Spleen (tissue), 13 donors: ENCODE measurements at regions of chr14 and their contacts with region 1.

Region 1: DNA sequence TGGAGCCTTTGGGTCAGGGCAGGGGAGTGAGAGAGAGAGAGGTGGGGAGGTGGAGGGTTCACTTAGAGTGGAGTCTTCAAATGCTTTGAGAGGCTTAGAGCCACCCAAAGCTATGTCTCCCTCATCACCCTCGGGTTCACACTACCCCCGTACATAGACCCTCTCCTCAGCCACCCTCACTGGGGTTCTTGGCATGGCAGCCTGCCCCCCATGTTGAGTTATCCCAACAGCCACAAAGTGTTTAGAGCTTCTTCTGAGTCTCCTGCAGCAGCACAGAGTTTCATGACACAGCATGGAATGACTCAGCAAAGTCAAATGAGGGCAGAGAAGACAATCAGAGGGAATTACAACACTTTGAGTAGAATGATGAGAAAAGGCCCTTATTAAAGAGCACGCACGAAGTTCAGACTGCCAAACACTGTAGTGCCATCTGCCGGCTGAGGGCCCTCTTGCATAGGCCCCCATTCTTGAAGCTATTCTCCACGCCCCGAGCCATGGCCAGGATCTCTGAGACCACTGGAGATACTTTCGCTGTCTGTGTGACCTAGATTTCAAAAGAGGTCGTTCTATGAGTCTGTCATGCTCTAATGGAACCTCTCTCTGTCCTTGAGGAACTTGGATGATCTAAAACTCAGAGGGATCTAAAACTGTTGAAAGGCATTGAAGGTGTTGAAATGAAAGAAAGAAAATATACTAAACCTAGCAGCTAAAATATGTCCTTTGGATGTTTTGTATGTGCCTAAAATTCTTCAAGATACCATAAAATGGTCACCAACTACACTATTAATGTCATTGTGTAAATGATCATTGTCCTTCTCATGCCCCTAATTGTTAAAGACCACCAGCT is 221.9 kb downstream of the PELI2 start:
- DNase-seq: peak; percentile 84
- H3K4me3 ChIP-seq: no peak overlapping the region
- H3K27ac ChIP-seq: peak overlapping the region in 1 of 8 donors; percentile 3
- H3K4me1 ChIP-seq: peaks cover 0 to 49% (median 22%) of the 10 kb centered on the region in 6 donors
- H3K27me3 ChIP-seq: no peaks in the 10 kb centered on the region
- CTCF ChIP-seq: peak; percentile 56 to 88 (median 78)
- POLR2A ChIP-seq: no peak

Region 2: GRCh38 chr14:55731881-55732498 is 608.1 kb before region 1 on chr14:
- intact Hi-C with region 1: loop called (anchors 10 kb)
- DNase-seq: no peak
- H3K4me3 ChIP-seq: no peak overlapping the region
- H3K27ac ChIP-seq: no peak overlapping the region
- H3K4me1 ChIP-seq: no peaks in the 10 kb centered on the region
- H3K27me3 ChIP-seq: no peaks in the 10 kb centered on the region
- CTCF ChIP-seq: peak in 10 of 11 experiments; percentile 24 to 66 (median 53)
- POLR2A ChIP-seq: no peak

Region 3: GRCh38 chr14:55846826-55847446 is 493.1 kb before region 1 on chr14:
- intact Hi-C with region 1: loop called (anchors 10 kb)
- DNase-seq: no peak
- H3K4me3 ChIP-seq: no peak overlapping the region
- H3K27ac ChIP-seq: no peak overlapping the region
- H3K4me1 ChIP-seq: peaks cover 0 to 8% (median 3%) of the 10 kb centered on the region in 6 donors
- H3K27me3 ChIP-seq: no peaks in the 10 kb centered on the region
- CTCF ChIP-seq: no peak
- POLR2A ChIP-seq: no peak

Region 4: DNA sequence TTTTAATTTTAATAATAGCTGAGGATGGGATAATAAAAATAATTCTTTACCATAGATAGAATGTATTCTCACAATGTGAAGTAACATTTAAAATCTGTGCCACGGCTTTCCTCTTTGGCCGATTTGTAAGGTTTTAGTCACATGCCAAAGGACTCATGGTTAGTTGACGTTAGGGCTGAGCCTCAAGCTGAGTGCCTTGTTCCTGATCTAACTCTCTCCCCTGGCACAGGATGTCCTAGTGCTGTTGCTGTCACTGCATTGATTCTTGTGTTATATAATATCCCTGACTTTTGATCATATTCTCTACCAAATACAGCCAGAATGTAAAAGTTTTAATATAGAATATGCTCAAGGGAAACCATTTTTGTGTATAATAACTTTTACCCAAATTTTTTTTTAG is 77.5 kb before region 1 on chr14:
- intact Hi-C with region 1: no loop called
- DNase-seq: no peak
- H3K4me3 ChIP-seq: no peak overlapping the region
- H3K27ac ChIP-seq: no peak overlapping the region
- H3K4me1 ChIP-seq: no peaks in the 10 kb centered on the region
- H3K27me3 ChIP-seq: no peaks in the 10 kb centered on the region
- CTCF ChIP-seq: no peak
- POLR2A ChIP-seq: no peak